Activated CD4-positive, alpha-beta T cell treated with anti-CD3 and anti-CD28 coated beads for 36 hours (primary cell): ENCODE measurements at regions of chr6 and their contacts with region 1.

Region 1: DNA sequence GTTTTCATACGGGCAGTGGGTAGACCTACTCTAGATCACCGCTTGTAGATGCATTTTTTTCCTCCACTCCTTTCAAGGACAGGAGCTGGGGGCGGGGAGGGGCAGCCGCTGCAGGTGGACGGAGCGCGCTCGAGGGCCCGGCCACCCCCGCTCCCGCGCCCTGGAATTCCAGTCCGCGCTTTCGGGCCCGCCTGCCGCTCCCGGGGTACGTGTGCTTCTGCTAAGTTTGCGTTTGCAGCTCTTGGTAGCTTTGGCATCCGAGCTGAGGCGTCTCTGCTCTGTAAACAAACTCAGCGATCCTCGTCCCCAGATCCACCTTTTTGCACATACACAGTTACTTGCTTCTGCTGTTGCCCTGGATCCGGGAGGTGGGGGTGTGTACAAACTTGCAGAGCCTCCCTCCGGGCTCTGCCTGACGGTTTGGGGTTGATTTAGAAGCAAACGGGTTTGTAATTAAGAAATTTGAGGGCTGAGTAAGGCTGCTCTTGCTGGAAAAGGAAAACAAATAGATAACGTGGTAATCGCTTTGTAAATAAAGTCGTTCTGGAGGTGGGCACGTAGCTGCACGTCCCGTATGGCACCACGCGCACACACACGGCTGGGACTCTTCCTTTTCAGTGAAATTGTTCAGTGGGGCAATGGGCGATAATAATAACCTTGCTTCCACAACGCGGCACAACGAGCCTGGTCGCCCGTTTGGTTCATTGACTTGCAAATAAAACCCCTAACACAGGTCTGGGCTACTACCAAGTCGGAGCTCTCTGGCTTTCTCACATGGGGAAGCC is 976 bp upstream of the CITED2 start:
- DNase-seq: peak; percentile 90
- ATAC-seq: peak; percentile 57
- H3K4me3 Mint-ChIP-seq: peak overlapping the region; percentile 99
- H3K27ac Mint-ChIP-seq: peak overlapping the region; percentile 97
- H3K4me1 Mint-ChIP-seq: peaks cover 33% of the 10 kb centered on the region
- H3K27me3 Mint-ChIP-seq: no peaks in the 10 kb centered on the region

Region 2: GRCh38 chr6:138588805-138589434 is 786.5 kb before region 1 on chr6:
- CTCF ChIA-PET with region 1: no interaction called
- POLR2A ChIA-PET with region 1: no interaction called
- intact Hi-C with region 1: loop called in 1 of 2 experiments (anchors 10 kb)
- DNase-seq: peak; percentile 67
- ATAC-seq: peak; percentile 11
- H3K4me3 Mint-ChIP-seq: no peak overlapping the region
- H3K27ac Mint-ChIP-seq: no peak overlapping the region
- H3K4me1 Mint-ChIP-seq: peaks cover 28% of the 10 kb centered on the region
- H3K27me3 Mint-ChIP-seq: no peaks in the 10 kb centered on the region

Region 3: DNA sequence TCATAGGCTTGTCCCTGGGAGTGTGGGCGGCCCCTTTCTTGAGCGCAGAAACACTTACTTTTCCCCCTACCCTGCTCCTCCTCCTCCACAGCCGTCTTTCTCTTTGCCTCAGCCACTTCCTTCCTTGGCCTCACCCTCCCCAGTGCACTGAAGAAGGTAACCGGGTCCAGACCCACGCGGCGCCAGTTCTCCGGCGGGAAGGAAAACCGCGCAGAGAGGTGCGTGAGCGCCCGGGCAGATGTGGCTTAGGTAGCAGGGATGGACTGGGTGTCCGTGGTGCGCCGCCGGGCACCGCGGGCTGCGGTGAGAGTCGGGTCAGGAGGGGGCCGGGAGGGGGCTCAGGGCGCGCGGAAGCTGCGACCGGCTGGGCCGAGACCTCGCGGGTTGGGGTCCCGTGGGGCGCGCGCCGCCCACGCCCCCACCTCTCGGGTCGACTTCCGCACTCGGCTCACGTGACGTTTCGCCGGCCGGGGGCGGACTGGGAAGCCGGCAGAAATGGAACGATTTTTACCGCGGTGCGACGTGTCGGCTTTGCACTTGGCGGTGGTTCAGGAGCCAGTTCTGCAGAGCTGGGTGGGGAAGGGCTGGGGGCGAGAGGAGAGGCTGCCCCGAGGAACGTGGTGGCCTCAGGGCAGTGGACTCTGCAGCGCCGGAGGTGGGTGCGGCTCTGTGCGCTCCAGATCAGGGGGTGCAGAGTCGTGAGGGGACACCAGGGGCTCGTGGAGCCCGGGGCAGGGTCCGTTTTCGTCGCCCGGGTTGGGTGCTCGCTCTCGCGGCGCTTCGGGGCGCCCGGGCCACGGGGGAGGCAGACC is 346.6 kb before region 1 on chr6 and contains the start of gene ABRACL:
- CTCF ChIA-PET with region 1: no interaction called
- POLR2A ChIA-PET with region 1: interaction called, 3 read pairs
- intact Hi-C with region 1: loop called (anchors 1 to 5 kb)
- DNase-seq: peak; percentile 93
- ATAC-seq: peak; percentile 85
- H3K4me3 Mint-ChIP-seq: no peak within 1 kb of the TSS
- H3K27ac Mint-ChIP-seq: peak within 1 kb of the TSS; percentile 93
- H3K4me1 Mint-ChIP-seq: peaks cover 23% of the 10 kb centered on the region
- H3K27me3 Mint-ChIP-seq: no peaks in the 10 kb centered on the region
- total RNA-seq, gene ABRACL: 92.5 to 180 TPM

Region 4: DNA sequence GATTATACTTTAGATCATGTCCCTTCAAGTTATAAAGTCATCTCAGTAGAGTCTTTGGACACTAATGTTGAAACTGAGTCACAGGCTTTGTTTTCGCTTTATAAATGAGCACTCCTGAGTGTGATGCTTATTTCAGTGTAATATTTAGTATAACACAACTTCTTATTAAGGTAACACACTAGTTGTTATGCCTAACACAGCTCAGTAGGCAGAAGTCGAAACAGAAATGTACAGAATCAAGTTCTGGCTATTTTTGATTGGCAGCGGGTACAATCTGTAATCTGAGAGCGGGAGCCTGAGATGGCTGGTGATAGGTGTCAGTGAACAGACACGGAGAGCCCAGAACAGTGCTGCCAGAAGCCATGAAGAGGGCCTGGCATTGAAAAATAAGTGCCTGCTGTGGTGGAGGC is 229.1 kb before region 1 on chr6:
- CTCF ChIA-PET with region 1: interaction called, 9 read pairs
- POLR2A ChIA-PET with region 1: interaction called, 13 read pairs
- intact Hi-C with region 1: no loop called
- DNase-seq: peak; percentile 60
- ATAC-seq: peak; percentile 71
- H3K4me3 Mint-ChIP-seq: peak overlapping the region; percentile 53
- H3K27ac Mint-ChIP-seq: peak overlapping the region; percentile 99
- H3K4me1 Mint-ChIP-seq: peaks cover 96% of the 10 kb centered on the region
- H3K27me3 Mint-ChIP-seq: no peaks in the 10 kb centered on the region

Region 5: DNA sequence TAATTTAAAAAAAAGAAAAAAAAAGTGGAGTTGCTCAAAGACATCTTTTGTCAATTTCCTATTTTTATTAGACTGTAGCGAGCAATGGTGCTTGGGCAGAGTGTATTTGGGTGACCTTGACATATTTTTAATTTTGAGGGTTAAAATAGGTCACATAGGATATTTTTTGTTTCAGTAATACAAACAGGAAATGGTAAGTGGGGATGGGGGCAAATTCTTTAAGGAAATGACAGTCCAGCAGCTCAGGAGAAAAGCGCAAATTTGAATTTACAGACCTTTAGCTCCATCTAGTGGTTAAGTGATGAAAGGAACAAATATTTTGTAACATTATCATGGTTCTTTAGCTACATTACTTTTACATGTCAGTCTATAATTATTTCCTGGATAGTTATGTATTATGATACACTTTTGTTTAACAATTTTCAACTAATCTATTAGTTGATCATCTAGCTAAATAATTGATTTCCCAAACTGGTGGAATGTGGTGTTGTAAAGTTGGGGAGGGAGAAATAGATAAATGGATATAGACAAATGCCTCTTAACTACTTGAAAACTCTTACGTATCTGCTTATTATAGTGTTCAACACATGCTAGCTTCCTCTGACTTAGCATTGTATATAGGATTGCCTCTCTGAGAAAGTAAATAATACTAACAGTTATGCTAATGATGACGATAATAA is 11.0 kb before region 1 on chr6:
- CTCF ChIA-PET with region 1: interaction called, 20 read pairs
- POLR2A ChIA-PET with region 1: no interaction called
- intact Hi-C with region 1: no loop called
- DNase-seq: no peak
- ATAC-seq: peak; percentile 57
- H3K4me3 Mint-ChIP-seq: no peak overlapping the region
- H3K27ac Mint-ChIP-seq: no peak overlapping the region
- H3K4me1 Mint-ChIP-seq: peaks cover 25% of the 10 kb centered on the region
- H3K27me3 Mint-ChIP-seq: no peaks in the 10 kb centered on the region

Region 6: GRCh38 chr6:139540276-139540675 is 164.9 kb after region 1 on chr6:
- CTCF ChIA-PET with region 1: no interaction called
- POLR2A ChIA-PET with region 1: no interaction called
- intact Hi-C with region 1: loop called in 1 of 2 experiments (anchors 1 kb)
- DNase-seq: peak; percentile 80
- ATAC-seq: peak; percentile 96
- H3K4me3 Mint-ChIP-seq: peak overlapping the region; percentile 17
- H3K27ac Mint-ChIP-seq: peak overlapping the region; percentile 35
- H3K4me1 Mint-ChIP-seq: peaks cover 37% of the 10 kb centered on the region
- H3K27me3 Mint-ChIP-seq: no peaks in the 10 kb centered on the region

Region 7: DNA sequence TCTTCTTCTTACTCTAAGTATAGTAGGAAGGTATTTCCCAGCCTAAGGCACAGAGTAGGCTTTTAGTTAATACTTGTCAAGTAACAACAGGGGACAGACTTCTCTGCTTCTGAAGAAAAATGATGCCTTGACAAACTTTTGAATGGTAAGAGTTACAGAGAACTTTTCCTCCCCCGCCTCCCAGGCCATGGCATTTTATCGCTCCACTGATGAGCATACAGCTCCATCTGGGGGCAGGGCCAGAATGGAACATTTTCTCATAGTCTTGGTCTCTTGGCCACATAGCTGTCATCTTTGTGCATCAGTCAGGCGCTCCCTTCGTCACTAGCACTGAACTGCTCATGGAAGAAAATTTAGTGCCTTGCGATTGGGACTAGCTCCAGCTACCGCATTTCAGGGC is 1065.8 kb after region 1 on chr6:
- CTCF ChIA-PET with region 1: no interaction called
- POLR2A ChIA-PET with region 1: no interaction called
- intact Hi-C with region 1: loop called in 1 of 2 experiments (anchors 5 kb)
- DNase-seq: peak; percentile 18
- ATAC-seq: no peak
- H3K4me3 Mint-ChIP-seq: no peak overlapping the region
- H3K27ac Mint-ChIP-seq: no peak overlapping the region
- H3K4me1 Mint-ChIP-seq: no peaks in the 10 kb centered on the region
- H3K27me3 Mint-ChIP-seq: peaks cover 3% of the 10 kb centered on the region